ENCODE measurements at regions of chr17 and their contacts with region 1.

Region 1: GRCh38 chr17:38428112-38428642 is at the start of gene ARHGAP23:
- DNase-seq: peak; percentile 89
- H3K4me3 ChIP-seq: peak within 1 kb of the TSS; percentile 69 to 85 (median 82)
- H3K27ac ChIP-seq: peak within 1 kb of the TSS; percentile 90 to 99 (median 96)
- H3K4me1 ChIP-seq: peaks cover 0 to 75% (median 61%) of the 10 kb centered on the region in 4 donors
- H3K27me3 ChIP-seq: no peaks in the 10 kb centered on the region
- CTCF ChIP-seq: no peak
- EP300 ChIP-seq: no peak
- POLR2A ChIP-seq: peak in 1 of 2 donors; percentile 50
- total RNA-seq, gene ARHGAP23: 11.2 to 42.1 (median 28.5) TPM

Region 2: GRCh38 chr17:37643118-37643766 is 784.9 kb before region 1 on chr17 and contains the start of gene DDX52:
- intact Hi-C with region 1: loop called (anchors 10 kb)
- DNase-seq: peak; percentile 96
- H3K4me3 ChIP-seq: peak within 1 kb of the TSS; percentile 60 to 81 (median 78)
- H3K27ac ChIP-seq: peak within 1 kb of the TSS; percentile 86 to 92 (median 90)
- H3K4me1 ChIP-seq: peaks cover 0 to 43% (median 38%) of the 10 kb centered on the region in 4 donors
- H3K27me3 ChIP-seq: peaks cover 0 to 4% (median 0%) of the 10 kb centered on the region in 3 donors
- CTCF ChIP-seq: no peak
- EP300 ChIP-seq: no peak
- POLR2A ChIP-seq: peak in 1 of 2 donors; percentile 27
- total RNA-seq, gene DDX52: 16.5 to 21.2 (median 19.2) TPM

Region 3: DNA sequence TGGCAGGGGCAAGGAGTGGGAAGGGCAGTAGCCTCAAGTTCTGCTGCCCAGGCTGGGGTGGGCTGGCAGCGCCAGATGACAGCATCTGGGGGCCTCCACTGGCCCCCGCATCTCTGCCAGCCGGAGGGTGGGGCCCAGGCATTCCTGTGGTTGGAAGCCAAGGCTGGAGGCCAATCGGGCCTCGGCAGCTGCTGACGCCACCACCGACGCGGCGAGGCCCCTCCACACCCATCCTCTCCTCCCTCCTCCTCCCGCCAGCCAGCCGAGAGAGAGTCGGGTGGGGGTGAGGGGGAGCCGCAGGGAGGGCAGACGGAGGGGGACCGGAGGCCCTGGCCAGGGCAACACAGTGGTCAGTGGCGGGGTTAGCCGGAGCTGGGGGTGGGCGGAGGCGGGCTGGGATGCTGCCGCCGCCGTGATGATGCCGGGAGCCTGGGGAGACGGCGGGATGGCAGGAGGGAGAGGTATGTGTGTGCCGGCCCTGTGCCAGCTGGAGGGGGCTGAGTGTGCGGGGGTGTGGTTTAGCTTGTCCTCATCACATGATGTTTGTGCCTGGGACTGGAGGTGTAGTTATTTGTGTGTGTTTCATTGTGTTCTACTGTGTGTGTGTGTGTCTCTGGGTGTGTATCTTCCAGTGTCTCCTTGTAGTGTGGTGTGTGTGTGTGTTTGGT is 36.7 kb after region 1 on chr17:
- intact Hi-C with region 1: loop called (anchors 5 kb)
- DNase-seq: peak; percentile 97
- H3K4me3 ChIP-seq: peak overlapping the region; percentile 50 to 58 (median 56)
- H3K27ac ChIP-seq: peak overlapping the region; percentile 92 to 98 (median 95)
- H3K4me1 ChIP-seq: peaks cover 0 to 72% (median 69%) of the 10 kb centered on the region in 4 donors
- H3K27me3 ChIP-seq: no peaks in the 10 kb centered on the region
- CTCF ChIP-seq: no peak
- EP300 ChIP-seq: peak in 1 of 4 donors; percentile 12
- POLR2A ChIP-seq: peak in 1 of 2 donors; percentile 43

Region 4: GRCh38 chr17:38485146-38485468 is 56.9 kb after region 1 on chr17:
- intact Hi-C with region 1: loop called (anchors 1 kb)
- DNase-seq: no peak
- H3K4me3 ChIP-seq: no peak overlapping the region
- H3K27ac ChIP-seq: peak overlapping the region; percentile 15 to 89 (median 70)
- H3K4me1 ChIP-seq: peaks cover 0 to 38% (median 21%) of the 10 kb centered on the region in 4 donors
- H3K27me3 ChIP-seq: no peaks in the 10 kb centered on the region
- CTCF ChIP-seq: no peak
- EP300 ChIP-seq: no peak
- POLR2A ChIP-seq: no peak

Region 5: DNA sequence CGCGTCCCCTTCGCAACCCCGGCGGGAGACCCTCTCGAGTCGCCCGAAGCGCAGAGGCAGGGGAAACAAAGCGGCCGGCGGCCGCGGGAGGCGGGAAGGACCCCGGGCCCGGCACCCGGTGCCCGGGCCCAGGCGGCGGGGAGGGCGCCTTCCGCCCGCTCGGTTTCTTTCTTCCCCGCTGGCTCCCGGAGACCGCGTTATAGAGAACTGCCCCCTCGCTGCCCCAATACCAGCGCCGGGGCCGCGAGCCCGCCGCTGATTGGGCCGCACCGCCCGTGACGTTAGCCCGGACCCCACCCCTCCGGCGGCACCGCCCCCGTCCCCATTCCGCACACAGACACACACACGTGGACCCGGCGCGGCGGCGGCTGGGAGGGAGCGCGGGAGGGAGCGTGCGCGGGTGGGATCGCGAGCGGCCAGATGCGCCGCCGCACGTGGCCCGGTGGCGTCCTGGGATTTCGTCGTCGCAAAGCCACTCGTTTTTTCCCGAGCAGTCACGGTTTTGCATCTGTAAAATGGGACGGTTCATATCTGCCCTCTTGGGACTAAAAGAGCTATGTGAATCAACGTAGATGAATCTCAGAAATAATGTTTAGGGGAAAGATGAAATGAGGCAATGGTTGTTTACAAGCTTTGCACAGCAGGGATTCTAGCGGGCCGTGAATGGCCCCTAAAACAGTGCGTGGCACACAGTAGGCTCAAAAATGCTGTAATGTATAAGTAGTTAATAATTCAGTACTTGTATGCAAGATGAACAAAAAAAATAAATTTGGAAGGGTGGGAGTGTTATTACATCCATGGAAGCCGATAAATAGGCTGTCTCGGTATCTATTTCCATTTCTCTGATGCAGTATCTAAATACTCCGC is 246.8 kb after region 1 on chr17 and contains the start of gene EPOP:
- intact Hi-C with region 1: loop called (anchors 5 kb)
- DNase-seq: peak; percentile 91
- H3K4me3 ChIP-seq: peak within 1 kb of the TSS; percentile 24 to 63 (median 51)
- H3K27ac ChIP-seq: peak within 1 kb of the TSS in 3 of 4 donors; percentile 27 to 59 (median 58)
- H3K4me1 ChIP-seq: peaks cover 0 to 37% (median 34%) of the 10 kb centered on the region in 4 donors
- H3K27me3 ChIP-seq: peaks cover 25 to 63% (median 59%) of the 10 kb centered on the region in 3 donors
- CTCF ChIP-seq: no peak
- EP300 ChIP-seq: no peak
- POLR2A ChIP-seq: no peak
- total RNA-seq, gene EPOP: 0.36 to 2.8 (median 1.3) TPM